BJ (cell line): ENCODE measurements at regions of chrX and their contacts with region 1.

Region 1: GRCh38 chrX:24034485-24034884 is 7.5 kb upstream of the KLHL15 start:
- DNase-seq: no peak
- H3K4me3 ChIP-seq: no peak overlapping the region
- H3K27me3 ChIP-seq: no peaks in the 10 kb centered on the region
- CTCF ChIP-seq: no peak

Region 2: GRCh38 chrX:24145340-24146186 is 111.1 kb after region 1 on chrX:
- CTCF ChIA-PET with region 1: no interaction called
- POLR2A ChIA-PET with region 1: interaction called, 12 read pairs
- DNase-seq: peak; percentile 14
- H3K4me3 ChIP-seq: no peak overlapping the region
- H3K27me3 ChIP-seq: no peaks in the 10 kb centered on the region
- CTCF ChIP-seq: no peak; the same call in 1 of the 2 replicates

Region 3: GRCh38 chrX:24268786-24269185 is 234.3 kb after region 1 on chrX:
- CTCF ChIA-PET with region 1: no interaction called
- POLR2A ChIA-PET with region 1: interaction called, 13 read pairs
- DNase-seq: no peak
- H3K4me3 ChIP-seq: no peak overlapping the region
- H3K27me3 ChIP-seq: no peaks in the 10 kb centered on the region
- CTCF ChIP-seq: no peak